Ovary (tissue), 10 donors: ENCODE measurements at regions of chr5 and their contacts with region 1.

Region 1: GRCh38 chr5:39570403-39571027 is 145.7 kb upstream of the DAB2 start:
- DNase-seq: no peak
- H3K4me3 ChIP-seq: no peak overlapping the region
- H3K27ac ChIP-seq: no peak overlapping the region
- H3K4me1 ChIP-seq: no peaks in the 10 kb centered on the region
- H3K27me3 ChIP-seq: no peaks in the 10 kb centered on the region
- CTCF ChIP-seq: peak; percentile 20 to 55 (median 48)
- EP300 ChIP-seq: no peak
- POLR2A ChIP-seq: no peak

Region 2: DNA sequence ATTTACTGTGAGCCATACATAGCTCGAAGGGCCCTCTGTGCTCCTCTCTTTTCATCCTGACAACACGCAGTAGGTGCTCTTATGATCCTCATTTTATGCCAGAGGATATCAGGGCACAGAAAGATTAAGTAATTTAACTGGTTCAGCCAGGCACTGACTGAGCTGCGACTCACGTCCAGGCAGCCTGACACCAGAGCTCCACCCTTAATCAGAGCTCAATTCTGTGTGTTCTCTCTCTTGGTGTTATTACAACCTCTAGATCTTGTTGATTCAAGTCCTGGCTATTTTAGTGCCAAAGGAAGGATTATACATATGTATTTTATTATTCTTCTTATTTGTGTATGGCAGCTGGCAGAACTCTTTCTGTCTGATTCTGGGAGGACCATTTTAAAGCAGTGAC is 665.0 kb before region 1 on chr5:
- intact Hi-C with region 1: no loop called
- DNase-seq: no peak
- H3K4me3 ChIP-seq: no peak overlapping the region
- H3K27ac ChIP-seq: no peak overlapping the region
- H3K4me1 ChIP-seq: no peaks in the 10 kb centered on the region
- H3K27me3 ChIP-seq: no peaks in the 10 kb centered on the region
- CTCF ChIP-seq: no peak
- EP300 ChIP-seq: no peak
- POLR2A ChIP-seq: no peak

Region 3: GRCh38 chr5:39217365-39218281 is 352.9 kb before region 1 on chr5:
- intact Hi-C with region 1: loop called (anchors 2 to 10 kb)
- DNase-seq: peak; percentile 64 to 78 (median 67)
- H3K4me3 ChIP-seq: no peak overlapping the region
- H3K27ac ChIP-seq: no peak overlapping the region
- H3K4me1 ChIP-seq: no peaks in the 10 kb centered on the region
- H3K27me3 ChIP-seq: no peaks in the 10 kb centered on the region
- CTCF ChIP-seq: peak; percentile 79 to 87 (median 82)
- EP300 ChIP-seq: no peak
- POLR2A ChIP-seq: no peak

Region 4: DNA sequence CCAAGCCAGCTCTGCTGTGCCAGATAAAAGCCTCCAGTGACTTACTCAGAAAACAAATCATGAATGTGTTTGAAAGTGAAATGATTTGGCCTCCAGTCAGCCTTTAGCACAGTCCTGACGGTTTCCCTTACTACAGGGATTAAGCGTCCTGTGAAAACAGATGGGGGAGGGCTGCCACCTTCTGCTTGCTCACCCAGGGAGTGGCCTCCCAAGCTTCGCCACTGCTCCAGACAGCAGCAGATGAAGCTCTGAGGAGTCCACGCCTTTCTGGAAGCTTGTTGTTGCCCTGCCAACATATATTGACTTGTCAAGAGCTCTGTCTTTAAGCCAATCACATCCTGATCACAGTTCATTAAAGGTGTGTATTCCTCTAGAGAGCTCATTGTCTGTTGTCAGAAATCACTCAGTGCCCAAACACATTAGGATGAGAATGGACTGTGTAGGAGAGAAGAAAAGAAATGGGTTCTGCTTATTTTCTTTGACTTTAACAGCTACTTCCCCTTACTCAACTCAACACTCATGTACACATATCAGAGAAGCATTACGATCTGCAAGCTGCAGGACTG is 346.2 kb before region 1 on chr5:
- intact Hi-C with region 1: loop called (anchors 2 to 10 kb)
- DNase-seq: no peak
- H3K4me3 ChIP-seq: no peak overlapping the region
- H3K27ac ChIP-seq: no peak overlapping the region
- H3K4me1 ChIP-seq: no peaks in the 10 kb centered on the region
- H3K27me3 ChIP-seq: no peaks in the 10 kb centered on the region
- CTCF ChIP-seq: no peak
- EP300 ChIP-seq: no peak
- POLR2A ChIP-seq: no peak

Region 5: GRCh38 chr5:39376293-39376714 is 194.2 kb before region 1 on chr5:
- intact Hi-C with region 1: loop called in 1 of 4 experiments (anchors 5 kb)
- DNase-seq: peak in 2 of 5 donors; percentile 25 to 54
- H3K4me3 ChIP-seq: no peak overlapping the region
- H3K27ac ChIP-seq: no peak overlapping the region
- H3K4me1 ChIP-seq: peaks cover 4% of the 10 kb centered on the region
- H3K27me3 ChIP-seq: no peaks in the 10 kb centered on the region
- CTCF ChIP-seq: peak; percentile 42 to 58 (median 53)
- EP300 ChIP-seq: no peak
- POLR2A ChIP-seq: no peak

Region 6: DNA sequence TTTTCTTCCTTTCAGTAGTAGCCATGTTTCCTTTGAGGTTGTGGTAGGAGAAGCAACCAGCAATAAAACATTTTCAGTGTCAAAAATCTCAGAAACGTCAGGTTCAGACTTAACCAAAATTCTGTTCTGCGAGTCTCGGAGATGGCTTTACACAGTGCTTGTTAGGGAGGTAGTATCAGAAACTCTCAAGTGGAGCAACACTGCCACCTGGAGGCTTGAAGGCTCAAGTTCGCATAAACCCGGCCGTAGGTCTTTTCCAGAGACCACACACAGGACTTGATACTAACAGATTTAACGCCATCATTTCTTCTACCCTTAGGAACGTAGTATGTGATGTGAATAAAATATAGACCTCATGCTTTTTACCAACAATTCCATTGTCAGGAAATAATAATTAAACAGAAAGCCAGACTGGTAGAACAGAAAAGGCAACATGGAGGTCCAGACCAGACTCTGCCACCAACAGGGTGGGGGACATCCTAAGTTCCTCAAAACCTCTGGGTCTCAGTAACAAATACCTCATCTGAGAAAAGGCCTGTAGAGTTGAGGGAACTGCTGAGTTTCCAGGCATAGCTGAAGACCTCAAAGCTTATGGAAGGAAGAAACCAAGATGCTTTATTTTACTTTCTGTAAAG is 1117.7 kb after region 1 on chr5:
- intact Hi-C with region 1: loop called in 1 of 4 experiments (anchors 10 kb)
- DNase-seq: peak; percentile 60 to 82 (median 79)
- H3K4me3 ChIP-seq: no peak overlapping the region
- H3K27ac ChIP-seq: no peak overlapping the region
- H3K4me1 ChIP-seq: no peaks in the 10 kb centered on the region
- H3K27me3 ChIP-seq: no peaks in the 10 kb centered on the region
- CTCF ChIP-seq: peak; percentile 48 to 85 (median 66)
- EP300 ChIP-seq: no peak
- POLR2A ChIP-seq: no peak